ENCODE measurements at regions of chr7 and their contacts with region 1.

Region 1: DNA sequence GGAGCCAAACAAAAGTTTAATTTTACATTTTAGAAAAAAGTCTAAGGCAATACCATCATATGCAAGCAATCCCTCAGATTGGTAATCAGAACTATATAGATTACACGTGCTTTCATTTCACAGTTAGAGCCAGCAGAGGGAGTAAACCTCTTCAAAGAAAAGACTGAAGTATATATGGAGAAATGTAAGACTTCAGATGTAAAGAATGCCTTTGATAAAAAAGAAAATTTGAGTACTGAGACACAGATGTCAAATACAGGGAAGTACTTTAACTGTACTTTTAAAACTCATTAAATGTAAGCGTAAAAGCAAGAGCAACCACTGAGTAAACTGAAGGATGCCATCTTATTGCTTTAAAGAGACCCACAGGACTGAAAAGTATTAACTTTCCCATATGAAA is 101.4 kb upstream of the FAM133B start:
- DNase-seq: peak in 1 of 2 experiments; percentile 60
- H3K4me3 ChIP-seq: no peak overlapping the region
- H3K4me3 Mint-ChIP-seq: no peak overlapping the region
- H3K27ac Mint-ChIP-seq: peak overlapping the region; percentile 89
- H3K4me1 ChIP-seq: peaks cover 40% of the 10 kb centered on the region
- H3K4me1 Mint-ChIP-seq: peaks cover 20% of the 10 kb centered on the region
- H3K27me3 ChIP-seq: no peaks in the 10 kb centered on the region
- H3K27me3 Mint-ChIP-seq: no peaks in the 10 kb centered on the region
- CTCF ChIP-seq: peak; percentile 59 to 62

Region 2: GRCh38 chr7:92621026-92621540 is 70.5 kb before region 1 on chr7:
- CTCF ChIA-PET with region 1: no interaction called
- POLR2A ChIA-PET with region 1: no interaction called
- intact Hi-C with region 1: loop called (anchors 1 kb)
- DNase-seq: peak; percentile 60 to 69
- H3K4me3 ChIP-seq: no peak overlapping the region
- H3K4me3 Mint-ChIP-seq: no peak overlapping the region
- H3K27ac Mint-ChIP-seq: peak overlapping the region; percentile 13
- H3K4me1 ChIP-seq: no peaks in the 10 kb centered on the region
- H3K4me1 Mint-ChIP-seq: peaks cover 7% of the 10 kb centered on the region
- H3K27me3 ChIP-seq: no peaks in the 10 kb centered on the region
- H3K27me3 Mint-ChIP-seq: no peaks in the 10 kb centered on the region
- CTCF ChIP-seq: peak; percentile 66 to 68

Region 3: DNA sequence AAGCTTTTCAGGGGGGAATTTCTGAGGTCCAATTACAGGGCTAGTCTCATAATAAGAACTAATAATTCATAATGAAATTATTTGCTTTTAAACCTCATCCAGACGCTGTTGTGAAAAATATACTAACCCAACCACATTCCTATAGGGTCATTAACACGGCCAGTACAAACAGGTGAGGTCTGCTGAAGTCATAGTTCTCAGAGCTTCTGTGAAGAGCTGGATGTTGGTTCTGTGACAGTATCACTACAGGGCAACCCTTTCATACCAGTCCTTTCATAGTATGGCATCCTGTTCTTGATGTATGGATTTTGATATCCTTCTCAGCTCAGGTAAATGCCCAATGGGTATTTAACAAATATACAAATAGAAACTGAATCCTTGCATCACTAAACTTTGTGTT is 39.0 kb before region 1 on chr7:
- CTCF ChIA-PET with region 1: interaction called, 5 read pairs
- POLR2A ChIA-PET with region 1: interaction called, 7 read pairs
- intact Hi-C with region 1: loop called (anchors 1 kb)
- DNase-seq: peak; percentile 52 to 55
- H3K4me3 ChIP-seq: no peak overlapping the region
- H3K4me3 Mint-ChIP-seq: no peak overlapping the region
- H3K27ac Mint-ChIP-seq: peak overlapping the region; percentile 56
- H3K4me1 ChIP-seq: peaks cover 33% of the 10 kb centered on the region
- H3K4me1 Mint-ChIP-seq: peaks cover 59% of the 10 kb centered on the region
- H3K27me3 ChIP-seq: no peaks in the 10 kb centered on the region
- H3K27me3 Mint-ChIP-seq: no peaks in the 10 kb centered on the region
- CTCF ChIP-seq: no peak

Region 4: GRCh38 chr7:92674127-92674778 is 17.3 kb before region 1 on chr7:
- CTCF ChIA-PET with region 1: no interaction called
- POLR2A ChIA-PET with region 1: no interaction called
- intact Hi-C with region 1: no loop called
- DNase-seq: no peak
- H3K4me3 ChIP-seq: no peak overlapping the region
- H3K4me3 Mint-ChIP-seq: no peak overlapping the region
- H3K27ac Mint-ChIP-seq: peak overlapping the region; percentile 3
- H3K4me1 ChIP-seq: no peaks in the 10 kb centered on the region
- H3K4me1 Mint-ChIP-seq: peaks cover 20% of the 10 kb centered on the region
- H3K27me3 ChIP-seq: no peaks in the 10 kb centered on the region
- H3K27me3 Mint-ChIP-seq: no peaks in the 10 kb centered on the region
- CTCF ChIP-seq: no peak

Region 5: GRCh38 chr7:92763636-92764423 is 72.3 kb after region 1 on chr7:
- CTCF ChIA-PET with region 1: no interaction called
- POLR2A ChIA-PET with region 1: no interaction called
- intact Hi-C with region 1: loop called (anchors 1 kb)
- DNase-seq: peak; percentile 82 to 83
- H3K4me3 ChIP-seq: no peak overlapping the region
- H3K4me3 Mint-ChIP-seq: no peak overlapping the region
- H3K27ac Mint-ChIP-seq: peak overlapping the region; percentile 51
- H3K4me1 ChIP-seq: peaks cover 62% of the 10 kb centered on the region
- H3K4me1 Mint-ChIP-seq: peaks cover 41% of the 10 kb centered on the region
- H3K27me3 ChIP-seq: no peaks in the 10 kb centered on the region
- H3K27me3 Mint-ChIP-seq: no peaks in the 10 kb centered on the region
- CTCF ChIP-seq: no peak

Region 6: GRCh38 chr7:92880212-92881090 is 188.9 kb after region 1 on chr7:
- CTCF ChIA-PET with region 1: no interaction called
- POLR2A ChIA-PET with region 1: no interaction called
- intact Hi-C with region 1: loop called (anchors 1 kb)
- DNase-seq: peak; percentile 66
- H3K4me3 ChIP-seq: no peak overlapping the region
- H3K4me3 Mint-ChIP-seq: no peak overlapping the region
- H3K27ac Mint-ChIP-seq: no peak overlapping the region
- H3K4me1 ChIP-seq: no peaks in the 10 kb centered on the region
- H3K4me1 Mint-ChIP-seq: peaks cover 6% of the 10 kb centered on the region
- H3K27me3 ChIP-seq: no peaks in the 10 kb centered on the region
- H3K27me3 Mint-ChIP-seq: peaks cover 7% of the 10 kb centered on the region
- CTCF ChIP-seq: peak; percentile 44 to 54

Region 7: GRCh38 chr7:93055543-93056107 is 364.0 kb after region 1 on chr7:
- CTCF ChIA-PET with region 1: no interaction called
- POLR2A ChIA-PET with region 1: no interaction called
- intact Hi-C with region 1: loop called (anchors 1 kb)
- DNase-seq: peak in 1 of 2 experiments; percentile 21
- H3K4me3 ChIP-seq: no peak overlapping the region
- H3K4me3 Mint-ChIP-seq: no peak overlapping the region
- H3K27ac Mint-ChIP-seq: no peak overlapping the region
- H3K4me1 ChIP-seq: no peaks in the 10 kb centered on the region
- H3K4me1 Mint-ChIP-seq: no peaks in the 10 kb centered on the region
- H3K27me3 ChIP-seq: no peaks in the 10 kb centered on the region
- H3K27me3 Mint-ChIP-seq: no peaks in the 10 kb centered on the region
- CTCF ChIP-seq: peak; percentile 50 to 76

Region 8: GRCh38 chr7:93231799-93232672 is 540.5 kb after region 1 on chr7 and contains the start of gene VPS50:
- CTCF ChIA-PET with region 1: no interaction called
- POLR2A ChIA-PET with region 1: no interaction called
- intact Hi-C with region 1: loop called (anchors 5 kb)
- DNase-seq: peak; percentile 96 to 97
- H3K4me3 ChIP-seq: peak within 1 kb of the TSS; percentile 51
- H3K4me3 Mint-ChIP-seq: peak within 1 kb of the TSS; percentile 96
- H3K27ac Mint-ChIP-seq: peak within 1 kb of the TSS; percentile 97
- H3K4me1 ChIP-seq: peaks cover 15% of the 10 kb centered on the region; the same call in 1 of the 2 replicates
- H3K4me1 Mint-ChIP-seq: no peaks in the 10 kb centered on the region
- H3K27me3 ChIP-seq: no peaks in the 10 kb centered on the region
- H3K27me3 Mint-ChIP-seq: no peaks in the 10 kb centered on the region
- CTCF ChIP-seq: peak in 1 of 2 experiments; percentile 32
- total RNA-seq, gene VPS50: 38.7 and 40.3 TPM in 2 replicates

Measured in Caco-2 (cell line).